ENCODE measurements at regions of chr19 and their contacts with region 1.

Region 1: DNA sequence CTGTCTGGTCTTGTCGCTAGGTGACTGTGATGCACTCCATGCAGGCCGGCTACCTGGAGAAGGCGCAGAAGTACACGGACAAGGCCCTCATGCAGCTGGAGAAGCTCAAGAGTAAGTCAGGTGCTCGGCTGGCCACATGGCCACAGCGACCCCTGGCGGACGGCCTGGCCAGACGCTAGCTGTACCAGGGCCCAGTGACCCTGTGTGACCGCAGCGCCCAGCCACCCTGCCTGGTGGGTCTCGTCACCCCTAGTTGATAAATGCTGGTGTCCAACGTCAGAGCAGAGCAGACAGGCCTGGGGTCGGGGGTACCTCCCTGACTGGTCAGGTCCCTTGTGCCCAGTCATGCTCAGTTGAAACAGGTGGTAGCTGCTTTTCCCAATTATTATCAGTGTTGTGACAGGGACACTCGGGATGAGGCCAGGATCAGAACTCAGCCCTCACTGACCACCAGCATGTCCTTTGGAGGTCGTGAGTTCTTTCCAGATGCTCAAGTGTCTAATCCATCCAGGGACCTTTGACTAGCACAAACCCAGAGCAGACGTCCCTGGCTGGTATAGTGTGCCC is 22.2 kb downstream of the MAU2 start:
- DNase-seq: peak; percentile 8
- H3K4me3 ChIP-seq: no peak overlapping the region
- H3K27ac ChIP-seq: no peak overlapping the region
- H3K27me3 ChIP-seq: no peaks in the 10 kb centered on the region
- CTCF ChIP-seq: peak; percentile 82

Region 2: DNA sequence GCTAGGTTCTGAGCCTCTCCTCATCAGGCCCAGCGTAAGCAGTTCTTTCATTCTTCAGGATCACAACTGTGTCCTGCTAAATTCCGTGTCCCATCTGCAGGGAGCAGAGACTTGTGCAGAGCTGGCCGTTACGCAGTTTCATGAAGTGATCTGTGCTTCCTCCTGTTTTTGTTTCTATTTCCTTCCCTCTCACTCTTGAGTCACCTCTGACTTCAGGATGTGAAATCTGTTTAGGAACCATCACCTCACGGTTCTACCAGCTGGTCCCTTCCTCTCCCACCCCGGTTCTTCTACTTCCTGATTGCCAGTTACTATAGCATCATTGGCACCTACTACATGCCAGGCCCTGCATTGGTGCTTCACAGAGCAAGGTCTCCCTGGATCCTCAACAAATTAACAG is 13.7 kb before region 1 on chr19:
- CTCF ChIA-PET with region 1: interaction called, 23 read pairs
- POLR2A ChIA-PET with region 1: interaction called, 3 read pairs
- DNase-seq: no peak
- H3K4me3 ChIP-seq: no peak overlapping the region
- H3K27ac ChIP-seq: no peak overlapping the region
- H3K27me3 ChIP-seq: no peaks in the 10 kb centered on the region
- CTCF ChIP-seq: no peak

Region 3: DNA sequence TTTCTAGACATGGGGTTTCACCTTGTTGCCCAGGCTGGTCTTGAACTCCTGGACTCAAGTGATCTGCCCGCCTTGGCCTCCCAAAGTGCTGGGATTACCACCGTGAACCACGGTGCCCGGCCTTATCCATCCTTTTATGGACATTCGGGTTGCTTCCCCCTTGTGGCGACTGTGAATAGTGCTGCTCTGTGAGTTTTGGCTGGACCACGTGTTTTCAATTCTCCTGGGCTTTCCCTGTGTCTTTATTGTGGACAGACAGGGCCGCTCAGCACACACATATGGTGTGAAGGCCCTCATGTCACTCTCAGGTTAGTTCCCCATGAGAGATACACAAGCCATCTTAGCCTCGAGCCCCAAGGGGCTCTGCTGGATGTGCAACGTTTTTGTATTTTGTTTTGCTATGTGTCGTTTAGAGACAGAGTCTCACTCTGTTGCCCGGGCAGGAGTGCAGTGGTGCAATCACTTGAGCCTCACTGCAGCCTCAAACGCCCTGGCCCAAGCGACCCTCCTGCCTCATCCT is 18.3 kb after region 1 on chr19:
- CTCF ChIA-PET with region 1: interaction called, 11 read pairs
- POLR2A ChIA-PET with region 1: no interaction called
- DNase-seq: peak; percentile 58
- H3K4me3 ChIP-seq: no peak overlapping the region
- H3K27ac ChIP-seq: no peak overlapping the region
- H3K27me3 ChIP-seq: no peaks in the 10 kb centered on the region
- CTCF ChIP-seq: peak; percentile 77

Region 4: GRCh38 chr19:19488875-19489690 is 146.2 kb after region 1 on chr19:
- CTCF ChIA-PET with region 1: interaction called, 15 read pairs
- POLR2A ChIA-PET with region 1: no interaction called
- DNase-seq: peak; percentile 69
- H3K4me3 ChIP-seq: peak overlapping the region; percentile 25
- H3K27ac ChIP-seq: peak overlapping the region; percentile 90
- H3K27me3 ChIP-seq: no peaks in the 10 kb centered on the region
- CTCF ChIP-seq: no peak